ENCODE measurements at regions of chr2 and their contacts with region 1.

Region 1: DNA sequence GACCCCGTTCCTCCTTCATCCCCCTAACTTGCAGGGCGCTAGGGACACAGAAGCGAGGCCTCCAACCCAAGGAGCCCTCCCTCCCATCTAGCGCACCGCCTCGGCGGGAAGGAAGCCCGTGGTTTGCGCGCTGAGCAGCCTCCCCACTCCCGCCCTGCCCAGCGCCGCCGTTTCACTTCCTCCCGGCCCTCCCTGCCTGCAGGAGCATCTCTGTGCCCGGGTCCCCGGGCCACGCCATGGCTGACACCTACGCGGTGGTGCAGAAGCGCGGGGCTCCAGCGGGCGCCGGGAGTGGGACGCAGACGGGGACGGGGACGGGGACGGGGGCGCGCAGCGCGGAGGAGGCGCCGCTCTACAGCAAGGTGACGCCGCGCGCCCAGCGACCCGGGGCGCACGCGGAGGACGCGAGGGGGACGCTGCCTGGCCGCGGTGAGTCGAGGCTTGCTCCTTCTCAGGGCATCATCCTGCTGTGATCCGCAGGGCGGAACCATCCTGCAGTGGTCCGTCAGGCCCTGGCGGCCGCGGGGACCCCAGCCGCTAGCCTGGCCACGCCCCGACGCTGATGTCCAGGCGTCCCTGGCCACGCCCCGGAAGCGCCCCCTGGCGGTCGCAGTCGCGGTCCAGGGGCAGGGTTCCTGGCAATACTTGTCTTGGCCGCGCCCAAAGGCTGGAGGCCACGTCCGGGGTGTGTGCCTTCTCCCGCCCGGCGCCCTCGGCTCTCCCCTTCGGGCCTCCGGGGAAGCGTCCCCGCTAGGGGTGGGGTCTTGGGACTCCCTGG is 16.4 kb downstream of the PTPN18 start:
- DNase-seq: peak; percentile 57 to 85 (median 72)
- ATAC-seq: peak; percentile 83
- H3K4me3 ChIP-seq: peak overlapping the region; percentile 76
- H3K4me3 Mint-ChIP-seq: peak overlapping the region; percentile 92
- H3K27ac ChIP-seq: peak overlapping the region; percentile 70 to 80
- H3K27ac Mint-ChIP-seq: peak overlapping the region; percentile 97
- H3K4me1 ChIP-seq: peaks cover 71% of the 10 kb centered on the region
- H3K4me1 Mint-ChIP-seq: peaks cover 73% of the 10 kb centered on the region
- H3K27me3 ChIP-seq: no peaks in the 10 kb centered on the region
- H3K27me3 Mint-ChIP-seq: no peaks in the 10 kb centered on the region
- CTCF ChIP-seq: peak; percentile 67

Region 2: DNA sequence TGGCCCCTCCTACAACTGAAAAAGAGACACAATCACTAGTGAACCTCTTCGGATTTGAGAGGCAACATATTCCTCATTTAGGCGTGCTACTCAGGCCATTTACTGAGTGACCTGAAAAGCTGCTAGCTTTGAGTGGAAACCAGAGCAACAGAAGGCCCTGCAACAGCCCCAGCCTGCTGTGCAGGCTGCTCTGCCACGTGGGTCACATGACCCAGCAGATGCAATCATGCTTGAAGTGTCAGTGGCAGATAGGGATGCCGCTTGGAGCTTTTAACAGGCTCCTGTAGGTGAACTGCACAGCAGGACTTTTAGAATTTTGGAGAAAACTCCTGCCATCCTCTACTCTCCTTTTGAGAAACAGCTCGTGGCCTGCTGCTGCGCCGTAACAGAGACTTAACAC is 971.4 kb before region 1 on chr2:
- CTCF ChIA-PET with region 1: no interaction called
- POLR2A ChIA-PET with region 1: no interaction called
- intact Hi-C with region 1: no loop called
- DNase-seq: no peak
- ATAC-seq: no peak
- H3K4me3 ChIP-seq: no peak overlapping the region
- H3K4me3 Mint-ChIP-seq: no peak overlapping the region
- H3K27ac ChIP-seq: no peak overlapping the region
- H3K27ac Mint-ChIP-seq: no peak overlapping the region
- H3K4me1 ChIP-seq: no peaks in the 10 kb centered on the region
- H3K4me1 Mint-ChIP-seq: no peaks in the 10 kb centered on the region
- H3K27me3 ChIP-seq: no peaks in the 10 kb centered on the region
- H3K27me3 Mint-ChIP-seq: no peaks in the 10 kb centered on the region
- CTCF ChIP-seq: no peak

Region 3: GRCh38 chr2:130316596-130316995 is 55.6 kb before region 1 on chr2:
- CTCF ChIA-PET with region 1: no interaction called
- POLR2A ChIA-PET with region 1: no interaction called
- intact Hi-C with region 1: no loop called
- DNase-seq: no peak
- ATAC-seq: no peak
- H3K4me3 ChIP-seq: no peak overlapping the region
- H3K4me3 Mint-ChIP-seq: no peak overlapping the region
- H3K27ac ChIP-seq: no peak overlapping the region
- H3K27ac Mint-ChIP-seq: no peak overlapping the region
- H3K4me1 ChIP-seq: no peaks in the 10 kb centered on the region
- H3K4me1 Mint-ChIP-seq: no peaks in the 10 kb centered on the region
- H3K27me3 ChIP-seq: peaks cover 0 to 3% of the 10 kb centered on the region in 2 experiments
- H3K27me3 Mint-ChIP-seq: peaks cover 13% of the 10 kb centered on the region
- CTCF ChIP-seq: no peak

Region 4: DNA sequence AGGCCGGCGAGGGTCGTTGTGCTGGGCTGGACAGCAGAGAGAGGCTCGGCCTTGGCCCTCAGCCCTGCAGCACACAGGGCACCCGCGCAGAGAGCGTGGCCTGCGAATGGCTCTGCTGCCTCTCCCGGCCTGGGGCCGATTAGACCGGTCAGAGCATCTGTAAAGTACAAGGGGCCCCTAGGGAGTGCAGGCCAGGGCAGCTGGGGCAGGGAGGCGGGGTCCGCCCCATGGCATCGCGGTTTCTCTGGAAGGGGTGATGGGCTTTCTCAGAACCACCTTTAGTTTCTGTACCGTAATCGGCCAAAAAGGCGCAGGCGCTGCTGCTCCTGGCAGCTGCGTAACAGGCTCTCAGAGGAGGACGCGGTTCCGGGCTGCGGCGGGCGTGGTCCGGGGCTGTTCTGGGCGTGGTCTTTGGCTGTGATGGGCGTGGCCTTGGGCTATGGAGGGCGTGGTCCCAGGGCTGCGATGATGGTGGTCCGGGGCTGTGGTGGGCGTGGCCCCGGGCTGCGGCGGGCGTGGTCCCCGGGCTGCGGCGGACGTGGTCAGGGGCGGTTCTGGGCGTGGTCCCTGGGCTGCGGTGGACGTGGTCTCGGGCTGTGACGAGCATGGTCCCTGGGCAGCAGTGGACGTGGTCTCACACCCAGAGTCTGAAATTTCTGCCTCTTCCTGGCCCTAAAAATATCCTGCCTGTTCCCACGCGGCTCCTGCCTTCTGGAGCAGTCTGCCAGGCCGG is 355.2 kb after region 1 on chr2:
- CTCF ChIA-PET with region 1: no interaction called
- POLR2A ChIA-PET with region 1: no interaction called
- intact Hi-C with region 1: loop called in 1 of 2 experiments (anchors 10 kb)
- DNase-seq: peak; percentile 77 to 94 (median 87)
- ATAC-seq: peak; percentile 91
- H3K4me3 ChIP-seq: peak overlapping the region; percentile 84
- H3K4me3 Mint-ChIP-seq: peak overlapping the region; percentile 88
- H3K27ac ChIP-seq: peak overlapping the region; percentile 62 to 89
- H3K27ac Mint-ChIP-seq: peak overlapping the region; percentile 90
- H3K4me1 ChIP-seq: peaks cover 34% of the 10 kb centered on the region
- H3K4me1 Mint-ChIP-seq: no peaks in the 10 kb centered on the region
- H3K27me3 ChIP-seq: no peaks in the 10 kb centered on the region
- H3K27me3 Mint-ChIP-seq: peaks cover 5% of the 10 kb centered on the region
- CTCF ChIP-seq: no peak

Measured in CD4-positive, alpha-beta T cell (primary cell).